ENCODE measurements at regions of chr5 and their contacts with region 1.

Region 1: DNA sequence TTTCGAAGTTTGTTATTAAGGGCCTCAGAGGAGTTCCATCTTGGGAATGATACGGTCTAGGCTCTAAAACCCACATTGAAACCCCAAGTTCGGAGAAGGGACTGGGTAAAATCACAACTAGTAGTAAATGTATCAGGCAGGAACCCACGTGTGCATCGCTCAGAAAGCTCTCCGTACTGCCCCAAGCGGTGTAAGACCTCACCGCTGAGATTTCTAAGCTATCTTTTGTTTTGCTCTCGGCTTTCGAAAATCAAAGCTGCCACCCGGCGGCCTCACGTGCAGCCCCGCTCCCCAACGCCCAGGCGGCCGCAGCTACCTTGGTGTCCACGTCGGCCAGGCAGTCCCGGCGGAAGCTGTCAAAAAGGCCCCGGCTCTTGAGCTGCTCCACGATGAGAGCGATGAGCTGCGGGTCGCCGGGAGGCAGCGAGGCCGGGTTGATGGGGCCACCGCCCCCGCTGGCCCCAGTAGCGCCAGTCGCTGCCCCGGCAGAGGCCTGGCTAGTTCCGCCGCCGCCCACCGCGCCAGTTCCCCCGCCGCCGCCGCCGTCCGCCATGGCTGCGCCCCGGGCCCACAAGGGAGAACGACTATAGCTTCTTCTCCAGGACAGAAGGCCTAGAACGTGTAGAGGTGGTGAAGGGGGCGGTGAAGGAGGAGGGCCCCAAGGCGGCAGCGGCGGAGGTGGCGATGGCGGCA is 420 bp downstream of the BOD1 start:
- DNase-seq: peak in 1 of 2 experiments; percentile 71
- H3K4me3 ChIP-seq: peak overlapping the region; percentile 82 to 95 (median 86)
- H3K27ac ChIP-seq: peak overlapping the region; percentile 76
- H3K4me1 ChIP-seq: peaks cover 2 to 14% (median 11%) of the 10 kb centered on the region in 4 experiments; a peak in 4 of 7 replicates
- H3K27me3 ChIP-seq: no peaks in the 10 kb centered on the region
- CTCF ChIP-seq: peak; percentile 56 to 63 (median 60)
- EP300 ChIP-seq: no peak
- POLR2A ChIP-seq: peak; percentile 66 to 74
- RAD21 ChIP-seq: peak in 1 of 2 experiments; percentile 32; a peak in 2 of 4 replicates

Region 2: DNA sequence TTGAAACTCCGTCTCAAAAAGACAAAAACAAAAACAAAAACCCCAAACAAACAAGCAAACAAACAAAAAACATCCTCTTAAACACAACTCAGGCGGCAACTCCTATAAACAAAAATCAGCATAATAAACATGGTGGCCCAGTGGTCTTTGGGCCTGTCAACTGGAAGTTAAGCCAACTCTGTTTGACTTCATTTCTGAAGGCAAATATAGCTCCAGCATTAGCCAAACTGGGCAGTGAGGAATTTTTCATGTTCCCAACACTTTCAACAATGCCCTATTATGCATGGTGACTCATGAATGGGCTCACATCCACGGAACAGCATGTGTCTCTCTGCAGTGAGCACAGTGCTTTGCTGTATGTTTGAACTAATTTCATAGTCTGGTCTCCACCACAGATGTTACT is 143.9 kb before region 1 on chr5:
- CTCF ChIA-PET with region 1: no interaction called
- POLR2A ChIA-PET with region 1: no interaction called
- DNase-seq: no peak
- H3K4me3 ChIP-seq: no peak overlapping the region
- H3K27ac ChIP-seq: no peak overlapping the region
- H3K4me1 ChIP-seq: no peaks in the 10 kb centered on the region
- H3K27me3 ChIP-seq: no peaks in the 10 kb centered on the region
- CTCF ChIP-seq: no peak
- EP300 ChIP-seq: no peak
- POLR2A ChIP-seq: no peak
- RAD21 ChIP-seq: no peak

Region 3: DNA sequence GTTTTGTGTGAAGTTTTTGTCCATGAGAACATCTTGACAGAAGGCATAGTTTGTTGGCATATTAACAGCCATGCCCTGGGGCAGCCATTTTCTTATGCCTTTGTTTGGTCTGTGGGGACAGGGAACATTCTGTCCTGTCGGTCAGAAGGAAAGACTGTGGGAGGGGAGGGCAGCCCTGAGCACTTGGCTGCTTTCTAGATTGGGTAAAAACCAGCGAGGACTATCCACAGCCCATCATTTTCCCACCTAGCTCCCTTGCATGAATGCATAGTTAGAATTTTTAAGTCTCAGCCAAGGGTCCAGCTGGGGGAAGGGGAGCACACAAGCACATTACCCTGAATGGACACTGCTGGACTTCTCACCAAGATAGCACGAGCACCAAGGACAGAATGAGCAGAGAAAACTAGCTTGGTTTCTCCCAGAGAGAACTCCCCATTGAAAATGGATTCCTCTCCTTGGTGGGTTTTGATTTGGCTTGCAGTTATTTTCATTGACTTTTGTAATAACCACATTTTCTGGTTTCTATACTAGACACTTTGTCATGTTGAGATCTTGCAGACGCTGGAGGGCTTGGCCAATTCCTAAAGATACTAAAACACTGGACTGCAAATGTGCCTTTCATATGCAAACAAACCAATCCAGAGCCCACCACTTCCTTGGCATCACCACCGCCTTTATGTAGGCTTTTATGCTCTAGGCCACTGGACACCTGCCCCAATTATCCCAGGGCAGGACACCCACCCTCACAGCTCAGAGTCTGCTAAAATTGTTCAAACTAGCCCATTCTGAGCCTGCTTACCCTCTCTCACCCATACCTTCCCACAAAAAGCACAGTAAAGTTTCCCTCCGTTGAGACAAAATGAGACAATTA is 129.4 kb before region 1 on chr5:
- CTCF ChIA-PET with region 1: no interaction called
- POLR2A ChIA-PET with region 1: no interaction called
- DNase-seq: no peak
- H3K4me3 ChIP-seq: no peak overlapping the region
- H3K27ac ChIP-seq: no peak overlapping the region
- H3K4me1 ChIP-seq: no peaks in the 10 kb centered on the region; a peak in 1 of 7 replicates
- H3K27me3 ChIP-seq: no peaks in the 10 kb centered on the region
- CTCF ChIP-seq: no peak
- EP300 ChIP-seq: no peak
- POLR2A ChIP-seq: no peak
- RAD21 ChIP-seq: no peak

Region 4: GRCh38 chr5:173592050-173592669 is 23.9 kb before region 1 on chr5:
- CTCF ChIA-PET with region 1: interaction called, 15 read pairs
- POLR2A ChIA-PET with region 1: interaction called, 4 read pairs
- DNase-seq: no peak
- H3K4me3 ChIP-seq: no peak overlapping the region
- H3K27ac ChIP-seq: no peak overlapping the region
- H3K4me1 ChIP-seq: no peaks in the 10 kb centered on the region; a peak in 1 of 7 replicates
- H3K27me3 ChIP-seq: no peaks in the 10 kb centered on the region
- CTCF ChIP-seq: peak; percentile 48 to 88 (median 66)
- EP300 ChIP-seq: no peak
- POLR2A ChIP-seq: no peak
- RAD21 ChIP-seq: peak; percentile 78 to 79

Region 5: DNA sequence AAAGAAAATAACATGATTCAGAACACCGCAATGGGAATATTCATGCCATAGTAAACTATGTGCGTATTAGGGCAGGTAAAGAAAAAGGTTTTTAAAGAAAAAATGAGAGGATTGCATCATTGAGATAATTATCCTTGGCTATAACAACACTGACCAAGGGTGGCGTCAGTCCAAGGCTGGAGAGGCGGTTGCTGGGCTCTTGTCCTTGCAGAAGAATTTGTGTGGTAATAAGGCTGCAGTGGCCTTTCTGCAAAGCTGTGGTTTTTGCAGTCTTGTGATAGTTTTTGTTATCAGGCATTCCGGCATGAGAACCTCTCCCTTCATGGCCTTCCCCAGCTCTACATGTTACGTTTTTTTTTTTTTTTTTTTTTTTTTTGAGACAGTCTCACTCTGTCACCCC is 13.6 kb before region 1 on chr5:
- CTCF ChIA-PET with region 1: interaction called, 15 read pairs
- POLR2A ChIA-PET with region 1: interaction called, 25 read pairs
- DNase-seq: no peak
- H3K4me3 ChIP-seq: no peak overlapping the region
- H3K27ac ChIP-seq: no peak overlapping the region
- H3K4me1 ChIP-seq: no peaks in the 10 kb centered on the region
- H3K27me3 ChIP-seq: no peaks in the 10 kb centered on the region
- CTCF ChIP-seq: peak in 1 of 3 experiments; percentile 25; a peak in 1 of 4 replicates
- EP300 ChIP-seq: no peak
- POLR2A ChIP-seq: no peak
- RAD21 ChIP-seq: peak in 1 of 2 experiments; percentile 6; a peak in 2 of 4 replicates

Region 6: GRCh38 chr5:173633304-173633703 is 17.3 kb after region 1 on chr5:
- CTCF ChIA-PET with region 1: interaction called, 11 read pairs
- POLR2A ChIA-PET with region 1: interaction called, 17 read pairs
- DNase-seq: no peak
- H3K4me3 ChIP-seq: no peak overlapping the region
- H3K27ac ChIP-seq: no peak overlapping the region
- H3K4me1 ChIP-seq: peaks cover 7 to 14% (median 10%) of the 10 kb centered on the region in 4 experiments
- H3K27me3 ChIP-seq: no peaks in the 10 kb centered on the region
- CTCF ChIP-seq: no peak
- EP300 ChIP-seq: no peak
- POLR2A ChIP-seq: no peak
- RAD21 ChIP-seq: no peak

Region 7: GRCh38 chr5:173653822-173654495 is 37.9 kb after region 1 on chr5:
- CTCF ChIA-PET with region 1: no interaction called
- POLR2A ChIA-PET with region 1: no interaction called
- DNase-seq: no peak
- H3K4me3 ChIP-seq: no peak overlapping the region
- H3K27ac ChIP-seq: no peak overlapping the region
- H3K4me1 ChIP-seq: peaks cover 0 to 2% (median 0%) of the 10 kb centered on the region in 4 experiments; a peak in 1 of 7 replicates
- H3K27me3 ChIP-seq: 0 out of 7 replicates have a peak, but pooled peaks cover 0 to 2% (median 0%) of the 10 kb centered on the region in 4 experiments
- CTCF ChIP-seq: no peak
- EP300 ChIP-seq: no peak
- POLR2A ChIP-seq: no peak
- RAD21 ChIP-seq: no peak

Region 8: GRCh38 chr5:173984218-173984617 is 368.2 kb after region 1 on chr5:
- CTCF ChIA-PET with region 1: interaction called, 26 read pairs
- POLR2A ChIA-PET with region 1: interaction called, 3 read pairs
- DNase-seq: peak in 1 of 2 experiments; percentile 50
- H3K4me3 ChIP-seq: no peak overlapping the region
- H3K27ac ChIP-seq: no peak overlapping the region
- H3K4me1 ChIP-seq: peaks cover 4 to 8% (median 5%) of the 10 kb centered on the region in 4 experiments; a peak in 4 of 7 replicates
- H3K27me3 ChIP-seq: no peaks in the 10 kb centered on the region
- CTCF ChIP-seq: peak; percentile 8 to 87 (median 80)
- EP300 ChIP-seq: no peak
- POLR2A ChIP-seq: no peak
- RAD21 ChIP-seq: peak; percentile 96

Measured in H1 (cell line).